Caco-2 (cell line): ENCODE measurements at regions of chr11 and their contacts with region 1.

Region 1: GRCh38 chr11:12052676-12053605 is 44.5 kb upstream of the DKK3 start:
- DNase-seq: peak; percentile 49 to 66
- H3K4me3 ChIP-seq: no peak overlapping the region
- H3K4me3 Mint-ChIP-seq: no peak overlapping the region
- H3K27ac Mint-ChIP-seq: peak overlapping the region; percentile 49
- H3K4me1 ChIP-seq: peaks cover 14% of the 10 kb centered on the region
- H3K4me1 Mint-ChIP-seq: peaks cover 34% of the 10 kb centered on the region
- H3K27me3 ChIP-seq: no peaks in the 10 kb centered on the region
- H3K27me3 Mint-ChIP-seq: no peaks in the 10 kb centered on the region
- CTCF ChIP-seq: peak in 1 of 2 experiments; percentile 31

Region 2: DNA sequence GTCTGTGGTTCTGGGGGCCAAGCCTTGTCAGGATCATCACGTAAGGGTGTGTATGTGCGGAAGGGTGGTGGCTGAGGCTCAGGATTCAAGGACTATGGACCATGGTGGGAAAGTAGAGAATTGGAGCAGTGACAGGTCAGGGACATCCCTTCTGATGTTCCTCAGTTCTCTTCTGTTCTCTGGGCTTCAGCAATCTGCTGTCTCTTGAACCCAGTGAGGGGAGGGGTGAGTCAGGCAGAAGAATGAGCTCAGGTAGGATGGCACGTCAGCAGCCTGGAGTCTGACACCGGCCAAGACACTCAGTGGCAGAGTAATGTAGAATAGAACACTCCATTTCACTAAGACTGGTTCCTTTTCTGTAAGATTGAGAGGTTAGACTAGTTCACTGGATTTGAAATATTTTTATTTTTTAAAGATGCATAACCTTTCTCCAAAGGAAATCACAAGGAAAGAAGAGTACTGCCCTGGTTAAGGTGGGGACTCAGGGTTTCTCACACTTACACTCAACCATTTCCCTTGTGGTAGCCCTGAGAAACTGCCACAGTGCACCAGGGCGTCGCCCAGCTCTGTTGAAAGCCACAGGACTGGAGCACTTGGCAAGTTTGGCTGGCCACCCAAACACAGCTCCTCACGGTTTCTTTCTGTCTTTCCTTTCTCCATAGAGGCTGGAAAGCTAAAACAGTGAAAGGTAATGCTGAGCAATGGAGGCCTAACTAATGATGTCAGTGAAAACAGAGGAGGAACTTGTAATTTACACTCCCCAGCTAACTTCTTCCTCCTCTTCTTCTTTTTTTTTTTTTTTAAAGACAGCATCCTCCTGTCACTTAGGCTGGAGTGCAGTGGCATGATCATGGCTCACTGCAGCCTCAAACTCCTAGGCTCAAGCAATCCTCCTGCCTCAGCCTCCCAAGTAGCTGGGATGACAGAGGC is 34.4 kb after region 1 on chr11:
- CTCF ChIA-PET with region 1: interaction called, 12 read pairs
- POLR2A ChIA-PET with region 1: no interaction called
- intact Hi-C with region 1: no loop called
- DNase-seq: peak; percentile 34 to 42
- H3K4me3 ChIP-seq: no peak overlapping the region
- H3K4me3 Mint-ChIP-seq: no peak overlapping the region
- H3K27ac Mint-ChIP-seq: peak overlapping the region; percentile 78
- H3K4me1 ChIP-seq: peaks cover 73% of the 10 kb centered on the region
- H3K4me1 Mint-ChIP-seq: peaks cover 60% of the 10 kb centered on the region
- H3K27me3 ChIP-seq: no peaks in the 10 kb centered on the region
- H3K27me3 Mint-ChIP-seq: no peaks in the 10 kb centered on the region
- CTCF ChIP-seq: peak; percentile 7 to 11

Region 3: GRCh38 chr11:12215181-12215593 is 162.2 kb after region 1 on chr11:
- CTCF ChIA-PET with region 1: interaction called, 11 read pairs
- POLR2A ChIA-PET with region 1: no interaction called
- intact Hi-C with region 1: no loop called
- DNase-seq: peak; percentile 60 to 61
- H3K4me3 ChIP-seq: no peak overlapping the region
- H3K4me3 Mint-ChIP-seq: no peak overlapping the region
- H3K27ac Mint-ChIP-seq: peak overlapping the region; percentile 87
- H3K4me1 ChIP-seq: peaks cover 56% of the 10 kb centered on the region
- H3K4me1 Mint-ChIP-seq: peaks cover 53% of the 10 kb centered on the region
- H3K27me3 ChIP-seq: no peaks in the 10 kb centered on the region
- H3K27me3 Mint-ChIP-seq: no peaks in the 10 kb centered on the region
- CTCF ChIP-seq: no peak